CD8-positive, alpha-beta T cell (primary cell): ENCODE measurements at regions of chr7 and their contacts with region 1.

Region 1: GRCh38 chr7:90346336-90347125 is at the start of gene GTPBP10:
- DNase-seq: peak; percentile 91 to 98 (median 95)
- ATAC-seq: peak; percentile 93
- H3K4me3 ChIP-seq: peak within 1 kb of the TSS; percentile 77 to 81
- H3K4me3 Mint-ChIP-seq: peak within 1 kb of the TSS; percentile 98
- H3K27ac ChIP-seq: peak within 1 kb of the TSS; percentile 92 to 97
- H3K27ac Mint-ChIP-seq: peak within 1 kb of the TSS; percentile 100
- H3K4me1 ChIP-seq: peaks cover 22% of the 10 kb centered on the region
- H3K4me1 Mint-ChIP-seq: peaks cover 56% of the 10 kb centered on the region
- H3K27me3 ChIP-seq: no peaks in the 10 kb centered on the region
- H3K27me3 Mint-ChIP-seq: no peaks in the 10 kb centered on the region
- CTCF ChIP-seq: peak; percentile 71
- total RNA-seq, gene GTPBP10: 15.3 to 18.3 TPM

Region 2: DNA sequence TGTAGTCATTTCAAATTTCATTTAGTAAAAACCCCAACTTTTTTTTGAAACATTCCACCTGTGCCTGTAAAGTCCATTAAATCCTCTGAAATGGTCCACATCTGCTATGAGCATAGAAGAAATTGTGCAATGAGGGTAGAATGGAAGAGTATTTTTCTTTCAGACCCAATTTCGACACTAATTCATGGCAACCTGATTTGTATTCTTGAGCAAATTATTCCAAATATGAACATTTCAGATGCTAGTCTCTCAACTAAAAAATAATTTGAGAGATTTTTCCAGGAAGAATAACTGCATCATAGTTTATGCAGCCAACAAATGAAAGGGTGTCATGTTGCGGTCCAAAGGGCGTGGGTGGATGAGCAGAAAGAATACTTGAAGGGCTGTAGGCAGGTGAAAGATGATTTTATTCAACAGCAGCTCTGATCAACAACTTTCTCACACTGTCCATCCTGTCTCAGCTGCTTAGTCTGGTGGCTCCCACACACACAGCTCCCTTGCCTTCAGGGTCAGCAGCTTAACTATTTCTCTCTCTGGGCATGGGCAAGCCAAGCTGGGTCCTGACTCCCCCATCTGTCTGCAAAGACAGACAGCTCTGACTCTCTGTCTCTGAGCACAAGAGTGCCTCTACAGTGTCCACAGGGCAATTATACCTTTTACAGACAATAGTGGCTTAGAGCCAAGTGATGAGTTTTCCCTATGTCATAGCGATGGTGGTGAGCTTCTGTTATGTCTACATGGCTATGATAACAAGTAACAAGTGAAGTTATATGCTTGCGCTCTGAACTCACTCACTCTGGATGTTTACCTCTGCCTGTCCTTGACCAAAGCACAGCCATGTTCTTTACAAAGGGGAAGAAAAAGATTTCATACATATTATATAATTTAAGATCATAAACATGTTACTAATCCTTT is 123.5 kb before region 1 on chr7:
- CTCF ChIA-PET with region 1: no interaction called
- POLR2A ChIA-PET with region 1: no interaction called
- intact Hi-C with region 1: no loop called
- DNase-seq: no peak
- ATAC-seq: no peak
- H3K4me3 ChIP-seq: no peak overlapping the region
- H3K4me3 Mint-ChIP-seq: no peak overlapping the region
- H3K27ac ChIP-seq: no peak overlapping the region
- H3K27ac Mint-ChIP-seq: no peak overlapping the region
- H3K4me1 ChIP-seq: no peaks in the 10 kb centered on the region
- H3K4me1 Mint-ChIP-seq: no peaks in the 10 kb centered on the region
- H3K27me3 ChIP-seq: no peaks in the 10 kb centered on the region
- H3K27me3 Mint-ChIP-seq: peaks cover 31% of the 10 kb centered on the region
- CTCF ChIP-seq: no peak

Region 3: DNA sequence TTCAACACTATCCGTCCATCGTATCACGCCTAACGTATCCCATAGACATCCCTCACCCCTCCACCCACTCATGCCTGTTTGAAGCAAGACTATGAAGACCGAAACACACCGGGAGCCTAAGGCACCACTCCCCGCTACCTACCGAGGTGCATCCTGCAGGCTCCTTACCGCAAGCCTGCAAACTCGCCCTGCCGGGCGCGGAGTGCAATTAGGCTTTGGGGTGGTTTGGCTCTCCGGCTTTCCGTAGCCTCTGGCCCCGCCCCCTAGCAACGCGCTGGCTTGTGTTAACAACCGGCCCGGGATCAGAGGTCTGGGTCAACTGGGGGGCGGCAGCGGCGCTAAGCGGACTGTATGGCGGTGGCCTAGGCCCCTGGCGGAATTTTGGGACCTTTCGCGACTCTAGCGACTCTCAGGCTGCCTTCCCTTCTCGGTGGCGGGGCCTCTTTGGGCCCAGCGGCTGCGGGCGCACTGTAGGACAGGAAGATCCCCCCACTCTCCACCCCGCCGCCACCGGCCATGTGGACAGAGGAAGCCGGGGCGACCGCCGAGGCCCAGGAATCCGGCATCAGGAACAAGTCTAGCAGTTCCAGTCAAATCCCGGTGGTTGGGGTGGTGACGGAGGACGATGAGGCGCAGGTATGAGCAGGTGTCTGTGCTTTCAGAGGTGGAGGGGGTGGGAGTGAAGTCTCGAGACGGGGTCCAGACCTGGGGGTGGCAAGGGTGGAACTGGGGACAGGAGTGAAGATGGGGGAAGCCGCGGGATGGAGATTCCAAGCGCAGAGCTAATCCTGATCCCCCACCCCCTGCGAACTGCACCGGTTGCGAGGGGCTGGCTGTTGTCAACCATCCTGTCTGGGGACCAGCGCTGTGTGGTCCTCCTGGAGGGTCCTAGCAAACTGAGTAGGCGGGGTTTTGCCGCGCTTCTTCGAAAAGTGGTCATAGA is 101.4 kb before region 1 on chr7 and contains the start of gene CFAP69:
- CTCF ChIA-PET with region 1: no interaction called
- POLR2A ChIA-PET with region 1: no interaction called
- intact Hi-C with region 1: loop called (anchors 1 kb)
- DNase-seq: peak; percentile 71 to 90 (median 84)
- ATAC-seq: peak; percentile 86
- H3K4me3 ChIP-seq: peak within 1 kb of the TSS; percentile 78 to 83
- H3K4me3 Mint-ChIP-seq: peak within 1 kb of the TSS; percentile 92
- H3K27ac ChIP-seq: peak within 1 kb of the TSS in 1 of 2 experiments; percentile 54
- H3K27ac Mint-ChIP-seq: no peak within 1 kb of the TSS
- H3K4me1 ChIP-seq: peaks cover 3% of the 10 kb centered on the region
- H3K4me1 Mint-ChIP-seq: peaks cover 22% of the 10 kb centered on the region
- H3K27me3 ChIP-seq: peaks cover 0 to 9% of the 10 kb centered on the region in 2 experiments
- H3K27me3 Mint-ChIP-seq: peaks cover 54% of the 10 kb centered on the region
- CTCF ChIP-seq: peak; percentile 19
- total RNA-seq, gene CFAP69: not detected

Region 4: GRCh38 chr7:90383422-90383821 is 36.9 kb after region 1 on chr7:
- CTCF ChIA-PET with region 1: interaction called, 3 read pairs
- POLR2A ChIA-PET with region 1: interaction called, 3 read pairs
- intact Hi-C with region 1: loop called in 1 of 2 experiments (anchors 5 kb)
- DNase-seq: no peak
- ATAC-seq: no peak
- H3K4me3 ChIP-seq: no peak overlapping the region
- H3K4me3 Mint-ChIP-seq: no peak overlapping the region
- H3K27ac ChIP-seq: no peak overlapping the region
- H3K27ac Mint-ChIP-seq: peak overlapping the region; percentile 18
- H3K4me1 ChIP-seq: no peaks in the 10 kb centered on the region
- H3K4me1 Mint-ChIP-seq: no peaks in the 10 kb centered on the region
- H3K27me3 ChIP-seq: no peaks in the 10 kb centered on the region
- H3K27me3 Mint-ChIP-seq: no peaks in the 10 kb centered on the region
- CTCF ChIP-seq: no peak

Region 5: GRCh38 chr7:90403174-90404113 is 56.9 kb after region 1 on chr7 and contains the start of gene CLDN12:
- CTCF ChIA-PET with region 1: no interaction called
- POLR2A ChIA-PET with region 1: interaction called, 5 read pairs
- intact Hi-C with region 1: loop called (anchors 1 kb)
- DNase-seq: peak; percentile 44 to 94 (median 71)
- ATAC-seq: peak; percentile 98
- H3K4me3 ChIP-seq: peak within 1 kb of the TSS; percentile 64 to 84
- H3K4me3 Mint-ChIP-seq: peak within 1 kb of the TSS; percentile 96
- H3K27ac ChIP-seq: peak within 1 kb of the TSS; percentile 50 to 66
- H3K27ac Mint-ChIP-seq: peak within 1 kb of the TSS; percentile 93
- H3K4me1 ChIP-seq: peaks cover 11% of the 10 kb centered on the region
- H3K4me1 Mint-ChIP-seq: peaks cover 18% of the 10 kb centered on the region
- H3K27me3 ChIP-seq: no peaks in the 10 kb centered on the region
- H3K27me3 Mint-ChIP-seq: no peaks in the 10 kb centered on the region
- CTCF ChIP-seq: no peak
- total RNA-seq, gene CLDN12: 1.8 to 1.9 TPM

Region 6: GRCh38 chr7:91940572-91941341 is 1594.2 kb after region 1 on chr7 and contains the start of gene AKAP9:
- CTCF ChIA-PET with region 1: no interaction called
- POLR2A ChIA-PET with region 1: no interaction called
- intact Hi-C with region 1: loop called in 1 of 2 experiments (anchors 10 kb)
- DNase-seq: peak; percentile 71 to 93 (median 89)
- ATAC-seq: peak; percentile 84
- H3K4me3 ChIP-seq: peak within 1 kb of the TSS; percentile 78 to 92
- H3K4me3 Mint-ChIP-seq: peak within 1 kb of the TSS; percentile 93
- H3K27ac ChIP-seq: peak within 1 kb of the TSS; percentile 91 to 93
- H3K27ac Mint-ChIP-seq: peak within 1 kb of the TSS; percentile 96
- H3K4me1 ChIP-seq: peaks cover 21% of the 10 kb centered on the region
- H3K4me1 Mint-ChIP-seq: peaks cover 45% of the 10 kb centered on the region
- H3K27me3 ChIP-seq: no peaks in the 10 kb centered on the region
- H3K27me3 Mint-ChIP-seq: no peaks in the 10 kb centered on the region
- CTCF ChIP-seq: no peak
- total RNA-seq, gene AKAP9: 61.2 to 61.3 TPM